Right lobe of liver (tissue), 6 donors: ENCODE measurements at regions of chr15 and their contacts with region 1.

Region 1: GRCh38 chr15:66603301-66604179 is 37.7 kb upstream of the LCTL start:
- DNase-seq: peak; percentile 74 to 80 (median 75)
- ATAC-seq: peak; percentile 90 to 95 (median 94)
- H3K4me3 ChIP-seq: no peak overlapping the region
- H3K27ac ChIP-seq: no peak overlapping the region
- H3K4me1 ChIP-seq: no peaks in the 10 kb centered on the region
- H3K27me3 ChIP-seq: no peaks in the 10 kb centered on the region
- CTCF ChIP-seq: peak; percentile 83 to 90 (median 84)
- POLR2A ChIP-seq: no peak

Region 2: DNA sequence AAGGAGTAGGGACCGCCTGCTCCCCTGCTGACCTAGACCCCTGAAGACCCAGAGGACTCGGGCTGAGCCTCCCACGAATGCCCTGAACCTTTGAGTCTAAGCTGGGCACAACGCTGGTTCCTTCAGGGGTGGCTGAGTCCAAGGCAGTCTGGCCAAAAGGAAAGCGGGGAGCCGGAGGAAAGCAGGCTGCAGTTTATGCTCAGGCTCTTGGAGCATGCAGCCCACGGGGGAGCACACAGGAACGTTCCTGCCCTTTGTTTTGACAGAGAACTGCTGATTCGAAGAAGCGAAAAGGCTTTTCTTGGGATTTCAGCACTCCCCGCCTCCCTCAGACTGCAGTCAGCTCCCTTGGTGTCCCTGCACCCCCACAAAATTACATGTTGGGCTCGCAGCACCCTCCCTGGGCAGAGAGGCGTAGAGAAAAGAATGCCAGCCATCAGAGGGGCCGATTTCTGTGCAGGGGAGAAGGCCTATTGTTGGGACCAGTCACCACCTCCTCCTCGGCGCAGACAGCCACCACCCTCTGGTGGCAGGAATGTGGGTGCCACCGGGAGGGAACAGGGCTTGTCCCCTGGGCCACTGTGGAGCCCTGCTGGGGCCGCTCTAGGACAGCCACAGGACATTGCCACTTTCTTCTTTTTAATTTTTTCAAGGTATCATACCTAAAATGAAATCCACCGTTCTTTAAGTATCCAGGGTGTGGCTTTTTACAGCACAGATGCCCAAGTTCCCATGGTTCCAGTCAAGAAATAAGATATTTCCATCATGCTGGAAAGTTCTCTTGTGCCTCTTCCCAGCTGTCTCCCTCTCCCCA is 170.7 kb after region 1 on chr15:
- intact Hi-C with region 1: loop called (anchors 10 kb)
- DNase-seq: peak; percentile 84 to 85 (median 85)
- ATAC-seq: peak; percentile 90 to 92 (median 90)
- H3K4me3 ChIP-seq: no peak overlapping the region
- H3K27ac ChIP-seq: peak overlapping the region in 1 of 3 donors; percentile 42
- H3K4me1 ChIP-seq: peaks cover 0 to 41% (median 19%) of the 10 kb centered on the region in 4 donors
- H3K27me3 ChIP-seq: no peaks in the 10 kb centered on the region
- CTCF ChIP-seq: peak; percentile 95 to 99 (median 98)
- POLR2A ChIP-seq: no peak

Region 3: DNA sequence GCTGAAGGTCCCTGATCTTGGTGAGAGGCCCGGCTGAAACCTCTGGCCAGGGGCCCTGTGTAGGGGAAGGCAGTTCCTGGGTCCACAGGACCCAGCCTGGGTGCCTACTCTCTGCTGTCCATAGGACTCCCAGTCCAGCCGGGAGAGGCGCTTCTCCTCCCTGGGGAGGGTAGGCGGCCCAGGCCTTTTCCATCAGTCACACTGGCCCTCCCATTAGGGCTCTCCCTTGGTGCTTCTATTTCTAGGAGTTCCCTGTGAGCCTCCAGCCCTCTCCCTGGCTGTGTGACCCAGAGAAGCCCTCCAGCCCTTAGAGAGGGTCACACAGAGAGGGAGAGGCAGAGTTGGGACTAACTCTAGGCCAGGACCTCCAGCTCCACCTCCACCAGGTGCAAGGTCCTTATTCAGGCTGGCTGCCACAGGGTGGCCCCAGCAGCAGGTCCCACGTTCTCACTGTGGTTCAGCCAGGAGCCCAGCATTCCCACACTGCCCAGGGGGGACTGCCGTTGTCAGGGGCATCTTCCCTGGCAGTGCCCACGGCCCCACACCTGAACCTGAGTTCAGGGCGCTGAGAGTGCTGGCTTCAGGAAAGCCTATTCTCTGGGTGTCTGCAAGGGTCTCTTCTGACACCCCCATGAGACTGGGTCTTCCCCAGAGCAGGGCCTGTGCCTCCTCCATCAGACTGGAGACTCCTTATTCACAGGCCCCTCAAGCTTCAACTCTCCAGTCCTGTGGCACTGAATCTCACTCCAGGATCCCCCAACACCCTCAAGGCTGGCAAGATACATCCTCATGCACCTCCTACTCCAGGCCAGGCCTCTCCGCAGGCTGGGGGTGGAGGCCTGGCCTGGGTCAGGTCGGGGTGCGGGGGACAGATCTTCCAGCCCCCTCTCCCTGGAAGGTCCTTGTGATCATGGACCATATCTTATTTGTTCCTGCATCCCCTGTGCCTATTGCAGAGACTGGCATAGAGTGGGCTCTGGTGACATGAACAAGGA is 245.5 kb after region 1 on chr15:
- intact Hi-C with region 1: loop called in 1 of 2 experiments (anchors 5 kb)
- DNase-seq: peak in 1 of 3 donors; percentile 42
- ATAC-seq: no peak
- H3K4me3 ChIP-seq: no peak overlapping the region
- H3K27ac ChIP-seq: no peak overlapping the region
- H3K4me1 ChIP-seq: peaks cover 0 to 6% (median 0%) of the 10 kb centered on the region in 4 donors
- H3K27me3 ChIP-seq: no peaks in the 10 kb centered on the region
- CTCF ChIP-seq: no peak
- POLR2A ChIP-seq: no peak

Region 4: DNA sequence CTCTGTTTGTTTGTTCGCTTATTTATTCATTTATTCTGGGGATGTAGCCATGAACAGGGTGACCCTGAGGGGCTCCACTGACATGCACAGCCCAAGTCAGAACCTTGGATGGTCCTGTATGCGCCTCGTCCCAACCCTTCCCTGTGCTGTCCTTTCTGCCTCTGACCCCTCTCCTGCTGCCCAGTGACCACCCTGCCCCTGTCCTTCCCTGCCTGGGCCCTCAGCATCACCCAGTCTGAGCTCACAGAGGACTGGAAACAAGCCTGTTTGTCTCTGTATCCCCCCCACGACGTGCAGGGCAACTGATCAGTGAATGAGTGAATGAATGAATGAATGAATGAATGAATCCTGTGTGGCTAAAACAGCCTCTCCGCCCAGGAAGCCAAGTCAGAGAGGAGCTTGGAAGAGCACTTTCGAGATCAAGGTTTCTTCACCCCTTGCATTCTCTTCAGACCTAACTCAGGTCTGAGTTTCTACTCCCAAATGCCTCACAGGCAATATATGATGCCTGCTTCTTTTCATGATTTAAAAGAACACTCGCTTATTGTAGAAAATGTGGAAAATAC is 256.2 kb after region 1 on chr15:
- intact Hi-C with region 1: loop called in 1 of 2 experiments (anchors 5 kb)
- DNase-seq: peak in 1 of 3 donors; percentile 24
- ATAC-seq: no peak
- H3K4me3 ChIP-seq: no peak overlapping the region
- H3K27ac ChIP-seq: no peak overlapping the region
- H3K4me1 ChIP-seq: no peaks in the 10 kb centered on the region
- H3K27me3 ChIP-seq: no peaks in the 10 kb centered on the region
- CTCF ChIP-seq: no peak
- POLR2A ChIP-seq: no peak